Naive thymus-derived CD4-positive, alpha-beta T cell (primary cell): ENCODE measurements at regions of chr6 and their contacts with region 1.

Region 1: DNA sequence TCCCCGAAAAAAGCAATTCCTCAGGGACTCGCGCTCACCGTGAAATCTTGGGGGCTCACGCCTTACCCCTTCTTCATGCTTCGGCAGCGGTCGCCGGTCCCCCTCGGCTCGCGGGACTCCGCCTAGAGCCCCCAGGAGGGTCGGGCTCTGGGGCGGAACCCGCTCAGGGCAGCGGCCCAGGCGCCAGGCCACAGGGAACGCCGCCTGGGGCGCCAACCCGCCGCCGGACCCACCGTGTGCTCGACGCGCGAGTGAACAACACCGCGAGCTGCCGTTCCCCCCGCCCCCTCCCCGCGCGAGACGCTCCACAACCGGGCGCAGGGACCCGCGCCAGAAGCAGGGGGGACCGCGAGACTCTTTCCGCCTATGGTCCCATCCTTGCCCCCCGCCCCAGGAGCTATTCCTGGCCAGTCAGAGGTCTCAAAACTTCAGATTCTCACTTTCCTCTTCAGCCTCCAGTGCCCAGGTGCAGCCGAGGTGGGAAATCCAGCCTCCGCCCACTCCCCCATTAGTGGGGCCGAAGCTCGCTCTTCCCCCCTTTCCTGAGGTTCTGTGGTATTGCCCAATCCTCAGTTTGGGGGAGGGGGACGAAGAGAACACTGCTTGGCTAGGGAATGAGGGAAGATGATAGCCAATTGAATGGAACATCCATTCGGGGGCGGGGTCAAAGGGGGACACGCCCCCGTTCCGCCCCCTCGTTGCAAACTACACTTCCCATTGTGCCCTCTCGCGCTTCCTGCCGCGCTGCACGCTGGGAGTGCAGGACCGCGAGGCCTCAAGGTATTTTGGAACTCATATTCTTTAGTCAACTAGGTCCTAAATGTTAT is at the start of gene WASF1:
- DNase-seq: peak; percentile 84 to 94 (median 91)
- ATAC-seq: peak; percentile 96
- H3K4me3 ChIP-seq: peak within 1 kb of the TSS; percentile 83
- H3K4me3 Mint-ChIP-seq: peak within 1 kb of the TSS in 6 of 10 donors; percentile 84 to 90 (median 88)
- H3K27ac ChIP-seq: peak within 1 kb of the TSS; percentile 90
- H3K27ac Mint-ChIP-seq: peak within 1 kb of the TSS in 8 of 9 donors; percentile 2 to 87 (median 66)
- H3K4me1 ChIP-seq: peaks cover 17 to 23% of the 10 kb centered on the region in 2 donors
- H3K4me1 Mint-ChIP-seq: peaks cover 4 to 8% (median 5%) of the 10 kb centered on the region in 7 donors
- H3K27me3 ChIP-seq: peaks cover 0 to 7% of the 10 kb centered on the region in 2 donors
- H3K27me3 Mint-ChIP-seq: peaks cover 8 to 21% (median 9%) of the 10 kb centered on the region in 5 donors
- total RNA-seq, gene WASF1: 0.19 to 4.7 (median 0.51) TPM

Region 2: GRCh38 chr6:109095027-109095834 is 1084.4 kb before region 1 on chr6 and contains the start of gene CEP57L1:
- CTCF ChIA-PET with region 1: no interaction called
- POLR2A ChIA-PET with region 1: interaction called, 4 read pairs
- intact Hi-C with region 1: loop called in 1 of 2 experiments (anchors 1 kb)
- DNase-seq: peak; percentile 88 to 96 (median 94)
- ATAC-seq: peak; percentile 81
- H3K4me3 ChIP-seq: peak within 1 kb of the TSS; percentile 96
- H3K4me3 Mint-ChIP-seq: peak within 1 kb of the TSS; percentile 92 to 98 (median 96)
- H3K27ac ChIP-seq: peak within 1 kb of the TSS; percentile 94
- H3K27ac Mint-ChIP-seq: peak within 1 kb of the TSS; percentile 98 to 99 (median 99)
- H3K4me1 ChIP-seq: peaks cover 21 to 29% of the 10 kb centered on the region in 2 donors
- H3K4me1 Mint-ChIP-seq: peaks cover 26 to 64% (median 54%) of the 10 kb centered on the region in 7 donors
- H3K27me3 ChIP-seq: no peaks in the 10 kb centered on the region
- H3K27me3 Mint-ChIP-seq: no peaks in the 10 kb centered on the region
- total RNA-seq, gene CEP57L1: 3.1 to 17.2 (median 6.5) TPM

Region 3: DNA sequence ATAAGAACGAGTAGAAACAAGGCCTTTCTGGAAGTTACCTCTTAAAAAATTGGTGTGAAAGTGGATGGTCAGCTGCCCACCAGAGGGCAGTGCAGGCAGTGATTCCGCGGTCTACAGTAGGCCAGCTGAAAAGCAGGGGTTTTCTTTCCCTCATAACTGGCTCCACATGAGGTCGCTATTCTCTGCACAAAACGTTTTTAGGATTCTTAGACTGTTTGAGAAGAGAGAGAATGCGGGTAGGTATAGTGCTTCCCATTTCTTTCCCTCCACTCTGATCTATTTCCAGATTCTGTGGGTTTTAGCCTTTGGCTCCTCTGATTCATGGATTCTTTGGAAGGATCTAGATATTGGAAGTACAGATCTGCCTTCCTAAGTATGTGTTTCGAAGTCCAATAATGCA is 474.4 kb before region 1 on chr6:
- CTCF ChIA-PET with region 1: no interaction called
- POLR2A ChIA-PET with region 1: no interaction called
- intact Hi-C with region 1: loop called in 1 of 2 experiments (anchors 5 kb)
- DNase-seq: peak; percentile 46 to 74 (median 61)
- ATAC-seq: peak; percentile 99
- H3K4me3 ChIP-seq: no peak overlapping the region
- H3K4me3 Mint-ChIP-seq: no peak overlapping the region
- H3K27ac ChIP-seq: no peak overlapping the region
- H3K27ac Mint-ChIP-seq: no peak overlapping the region
- H3K4me1 ChIP-seq: no peaks in the 10 kb centered on the region
- H3K4me1 Mint-ChIP-seq: peaks cover 7 to 62% (median 38%) of the 10 kb centered on the region in 7 donors
- H3K27me3 ChIP-seq: no peaks in the 10 kb centered on the region
- H3K27me3 Mint-ChIP-seq: no peaks in the 10 kb centered on the region

Region 4: DNA sequence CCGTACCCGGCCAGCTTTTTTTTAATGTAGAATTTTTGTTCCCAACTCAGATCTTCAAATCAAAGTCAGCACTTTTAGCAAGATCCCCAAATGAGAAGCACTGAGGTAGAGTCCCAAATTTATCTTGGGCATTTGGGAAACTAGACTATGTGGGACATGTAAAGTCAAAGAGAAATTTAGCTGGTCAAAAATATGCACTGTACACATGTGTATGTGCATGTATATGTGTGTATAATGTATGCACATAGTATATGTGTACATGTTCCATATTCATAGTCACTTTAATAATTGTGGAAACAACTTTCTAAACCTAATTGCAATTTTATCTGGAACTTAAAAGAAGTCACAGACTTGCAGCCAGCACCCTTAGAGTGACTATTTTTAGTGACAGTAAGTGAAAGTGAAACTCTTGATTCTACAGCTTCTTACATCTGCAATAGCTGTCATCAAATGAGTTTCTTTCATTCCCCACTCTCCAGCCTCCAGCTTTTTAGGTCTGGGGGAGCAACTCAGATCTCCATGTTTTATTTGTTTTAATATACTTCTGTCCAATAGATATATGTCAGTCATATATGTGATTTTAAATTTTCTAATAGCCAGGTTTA is 54.3 kb after region 1 on chr6:
- CTCF ChIA-PET with region 1: no interaction called
- POLR2A ChIA-PET with region 1: no interaction called
- intact Hi-C with region 1: loop called in 1 of 2 experiments (anchors 2 kb)
- DNase-seq: peak in 2 of 9 donors; percentile 1 to 8
- ATAC-seq: peak; percentile 34
- H3K4me3 ChIP-seq: no peak overlapping the region
- H3K4me3 Mint-ChIP-seq: no peak overlapping the region
- H3K27ac ChIP-seq: no peak overlapping the region
- H3K27ac Mint-ChIP-seq: peak overlapping the region in 3 of 9 donors; percentile 28 to 67 (median 62)
- H3K4me1 ChIP-seq: peaks cover 0 to 5% of the 10 kb centered on the region in 2 donors
- H3K4me1 Mint-ChIP-seq: peaks cover 3 to 19% (median 7%) of the 10 kb centered on the region in 7 donors
- H3K27me3 ChIP-seq: no peaks in the 10 kb centered on the region
- H3K27me3 Mint-ChIP-seq: no peaks in the 10 kb centered on the region

Region 5: DNA sequence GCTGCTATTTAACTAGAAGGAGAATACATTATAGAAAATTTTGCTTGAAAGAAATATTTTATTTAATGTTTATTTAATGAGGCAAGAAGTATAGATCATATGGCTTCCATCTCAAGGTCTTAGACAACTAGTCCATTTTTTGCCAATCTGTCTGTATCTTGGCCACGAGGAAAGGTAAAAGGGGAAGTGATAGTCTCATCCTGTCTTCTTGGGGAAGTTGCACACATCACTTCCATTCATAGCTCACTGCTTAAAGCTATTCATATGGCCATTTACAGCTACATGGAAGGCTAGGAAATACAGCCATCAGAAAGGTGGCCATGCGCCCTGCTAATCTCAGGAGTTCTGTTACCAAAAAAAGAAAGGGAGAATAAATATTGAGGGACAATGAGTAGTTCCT is 127.8 kb after region 1 on chr6:
- CTCF ChIA-PET with region 1: no interaction called
- POLR2A ChIA-PET with region 1: no interaction called
- intact Hi-C with region 1: no loop called
- DNase-seq: no peak
- ATAC-seq: no peak
- H3K4me3 ChIP-seq: no peak overlapping the region
- H3K4me3 Mint-ChIP-seq: no peak overlapping the region
- H3K27ac ChIP-seq: no peak overlapping the region
- H3K27ac Mint-ChIP-seq: no peak overlapping the region
- H3K4me1 ChIP-seq: no peaks in the 10 kb centered on the region
- H3K4me1 Mint-ChIP-seq: peaks cover 0 to 5% (median 0%) of the 10 kb centered on the region in 7 donors
- H3K27me3 ChIP-seq: no peaks in the 10 kb centered on the region
- H3K27me3 Mint-ChIP-seq: peaks cover 7 to 12% (median 7%) of the 10 kb centered on the region in 5 donors

Region 6: GRCh38 chr6:110873981-110874879 is 694.6 kb after region 1 on chr6 and contains the start of gene AMD1:
- CTCF ChIA-PET with region 1: no interaction called
- POLR2A ChIA-PET with region 1: interaction called, 7 read pairs
- intact Hi-C with region 1: loop called (anchors 2 to 10 kb)
- DNase-seq: peak; percentile 87 to 97 (median 96)
- ATAC-seq: peak; percentile 85
- H3K4me3 ChIP-seq: peak within 1 kb of the TSS; percentile 99
- H3K4me3 Mint-ChIP-seq: peak within 1 kb of the TSS in 9 of 10 donors; percentile 94 to 99 (median 99)
- H3K27ac ChIP-seq: peak within 1 kb of the TSS; percentile 73
- H3K27ac Mint-ChIP-seq: peak within 1 kb of the TSS in 8 of 9 donors; percentile 96 to 100 (median 99)
- H3K4me1 ChIP-seq: peaks cover 26 to 28% of the 10 kb centered on the region in 2 donors
- H3K4me1 Mint-ChIP-seq: peaks cover 19 to 28% (median 27%) of the 10 kb centered on the region in 7 donors
- H3K27me3 ChIP-seq: no peaks in the 10 kb centered on the region
- H3K27me3 Mint-ChIP-seq: no peaks in the 10 kb centered on the region
- total RNA-seq, gene AMD1: 61.1 to 105 (median 73.8) TPM